ENCODE measurements at regions of chr17 and their contacts with region 1.

Region 1: DNA sequence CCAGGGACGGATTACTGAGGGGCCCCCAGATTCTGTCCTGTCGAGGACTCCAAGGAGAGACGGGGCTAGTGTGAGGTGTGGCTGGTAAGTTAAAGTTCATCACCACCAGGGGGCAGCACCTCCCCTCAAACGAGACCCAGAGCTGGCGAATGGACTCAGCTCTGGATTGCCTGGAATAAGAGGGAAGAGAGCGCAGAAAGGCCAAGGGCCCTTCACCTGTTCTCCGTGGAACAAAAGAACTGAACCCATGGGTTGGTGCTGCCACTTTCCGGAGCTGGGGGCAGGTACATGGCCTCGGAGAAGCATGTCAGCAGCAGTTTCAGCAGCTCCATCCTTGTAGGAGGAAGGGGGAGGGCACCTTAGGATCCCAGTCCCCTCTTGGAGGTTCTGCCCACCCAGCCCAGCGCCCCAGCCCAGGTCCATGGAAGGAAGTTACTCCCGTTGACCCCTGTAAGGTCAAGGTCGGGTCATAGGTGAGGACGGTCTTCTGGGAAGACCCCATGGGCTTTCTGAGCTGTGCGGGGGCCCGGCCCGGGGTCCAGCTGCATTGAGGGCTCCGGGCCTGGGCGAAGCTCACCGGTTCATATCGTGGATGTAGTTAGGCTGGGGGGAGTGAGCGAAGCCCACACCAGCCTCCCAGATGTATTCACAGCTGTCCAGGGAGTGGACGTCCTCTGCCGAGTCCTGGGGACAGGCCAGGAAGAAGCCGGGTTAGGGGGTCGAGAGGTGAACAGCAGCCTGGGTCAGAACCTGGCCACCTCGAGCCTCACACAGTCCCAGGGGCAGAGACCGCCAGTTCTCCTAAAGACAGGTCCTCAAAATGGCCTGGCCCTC is 10.7 kb downstream of the HID1 start:
- DNase-seq: peak; percentile 80
- ATAC-seq: peak; percentile 80
- H3K4me3 ChIP-seq: no peak overlapping the region
- H3K27ac ChIP-seq: no peak overlapping the region
- H3K4me1 ChIP-seq: peaks cover 11 to 20% of the 10 kb centered on the region in 2 experiments; a peak in 3 of 4 replicates
- H3K27me3 ChIP-seq: no peaks in the 10 kb centered on the region
- CTCF ChIP-seq: peak; percentile 75 to 95 (median 87)
- POLR2A ChIP-seq: no peak
- RAD21 ChIP-seq: peak; percentile 99

Region 2: DNA sequence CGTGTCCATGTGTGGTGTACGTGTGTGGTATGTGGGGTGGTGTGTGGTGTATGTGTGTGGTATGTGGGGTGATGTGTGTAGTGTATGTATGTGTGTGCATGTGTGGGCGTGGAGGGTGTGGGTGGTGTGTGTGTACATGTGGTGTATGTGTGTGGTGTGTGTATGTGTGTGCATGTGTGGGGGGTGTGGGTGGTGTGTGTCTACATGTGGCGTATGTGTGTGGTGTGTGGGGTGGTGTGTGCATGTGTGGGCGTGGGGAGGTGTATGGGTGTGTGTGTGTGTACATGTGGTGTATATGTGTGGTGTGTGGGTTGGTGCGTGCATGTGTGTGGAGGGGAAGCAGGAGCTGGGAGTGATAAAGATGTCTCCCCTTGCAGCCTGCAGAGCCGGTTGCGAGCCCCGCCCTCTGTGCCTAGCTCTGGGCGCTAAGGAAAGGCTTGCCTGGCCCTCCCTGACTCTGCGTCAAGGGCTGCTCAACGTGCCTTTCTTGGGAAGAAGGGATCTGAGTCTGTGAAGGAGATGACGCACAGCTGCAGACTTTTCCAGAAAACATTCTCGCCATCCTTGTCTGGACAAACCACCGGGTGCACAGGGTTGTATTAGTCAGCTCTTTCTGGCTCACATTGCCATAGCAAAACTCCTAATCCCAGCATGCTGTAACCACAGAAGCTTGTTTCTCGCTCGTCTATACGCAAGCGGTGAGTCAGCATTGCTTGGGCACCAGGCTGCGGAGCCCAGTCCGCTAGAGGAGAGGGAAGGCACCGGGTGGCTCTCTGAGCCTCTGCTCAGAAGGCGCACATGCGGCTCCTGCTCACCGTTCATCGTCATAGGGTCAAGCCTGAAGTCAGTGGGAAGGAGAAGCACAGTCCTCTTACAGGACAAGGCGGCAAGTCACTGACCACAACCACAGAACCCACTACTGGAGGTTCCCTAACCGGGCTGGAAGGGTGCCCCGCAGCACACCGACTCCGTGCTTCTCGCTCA is 392.6 kb before region 1 on chr17:
- CTCF ChIA-PET with region 1: no interaction called
- POLR2A ChIA-PET with region 1: no interaction called
- RAD21 ChIA-PET with region 1: no interaction called
- intact Hi-C with region 1: no loop called
- DNase-seq: peak; percentile 97
- ATAC-seq: peak; percentile 85
- H3K4me3 ChIP-seq: peak overlapping the region; percentile 6 to 28; a peak in 2 of 4 replicates
- H3K27ac ChIP-seq: peak overlapping the region; percentile 36
- H3K4me1 ChIP-seq: peaks cover 14 to 25% of the 10 kb centered on the region in 2 experiments
- H3K27me3 ChIP-seq: peaks cover 10% of the 10 kb centered on the region
- CTCF ChIP-seq: no peak
- POLR2A ChIP-seq: no peak
- RAD21 ChIP-seq: peak; percentile 7; the same call in 1 of the 2 replicates

Region 3: DNA sequence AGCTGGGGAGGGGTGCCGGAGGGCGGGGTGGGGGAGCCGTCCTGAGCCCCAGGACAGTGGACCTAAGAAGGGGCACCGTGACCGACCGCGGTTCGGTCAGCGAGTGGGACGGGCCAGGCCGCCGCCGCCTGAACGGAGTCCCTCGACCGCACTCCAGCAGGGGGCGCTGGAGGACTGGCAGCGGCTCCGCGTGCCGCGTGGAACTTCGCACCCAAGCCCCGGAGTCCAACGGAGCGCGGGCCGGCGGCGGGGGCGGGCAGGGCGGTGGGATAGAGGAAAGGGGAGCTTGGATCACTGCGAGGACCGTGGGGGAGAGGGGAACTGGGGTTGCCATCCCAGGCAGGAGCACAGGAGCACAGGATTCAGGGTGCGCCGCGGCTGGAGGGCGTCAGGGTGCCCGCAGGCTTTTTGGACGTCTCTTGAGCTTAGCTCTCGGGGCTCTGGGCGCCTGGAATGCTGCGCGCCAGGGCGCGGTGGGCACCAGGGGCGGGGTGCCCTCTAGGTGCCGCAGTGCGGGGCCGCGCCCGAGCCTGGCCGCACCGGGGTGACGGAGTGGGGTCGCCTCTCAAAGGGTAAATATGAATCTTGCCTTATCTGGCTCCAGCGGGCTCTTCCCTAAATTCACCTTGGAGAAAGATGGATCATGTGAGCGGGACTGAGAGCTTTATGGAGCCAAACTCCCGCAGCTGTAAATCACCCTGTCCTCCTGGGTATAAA is 38.2 kb before region 1 on chr17:
- CTCF ChIA-PET with region 1: interaction called, 21 read pairs
- POLR2A ChIA-PET with region 1: no interaction called
- RAD21 ChIA-PET with region 1: interaction called, 4 to 6 read pairs
- intact Hi-C with region 1: loop called (anchors 1 kb)
- DNase-seq: no peak
- ATAC-seq: peak; percentile 84
- H3K4me3 ChIP-seq: peak overlapping the region; percentile 58 to 65
- H3K27ac ChIP-seq: no peak overlapping the region
- H3K4me1 ChIP-seq: peaks cover 16 to 34% of the 10 kb centered on the region in 2 experiments
- H3K27me3 ChIP-seq: peaks cover 4% of the 10 kb centered on the region; the same call in 1 of the 2 replicates
- CTCF ChIP-seq: peak; percentile 84 to 93 (median 90)
- POLR2A ChIP-seq: no peak
- RAD21 ChIP-seq: no peak; the same call in none of the 2 replicates

Region 4: DNA sequence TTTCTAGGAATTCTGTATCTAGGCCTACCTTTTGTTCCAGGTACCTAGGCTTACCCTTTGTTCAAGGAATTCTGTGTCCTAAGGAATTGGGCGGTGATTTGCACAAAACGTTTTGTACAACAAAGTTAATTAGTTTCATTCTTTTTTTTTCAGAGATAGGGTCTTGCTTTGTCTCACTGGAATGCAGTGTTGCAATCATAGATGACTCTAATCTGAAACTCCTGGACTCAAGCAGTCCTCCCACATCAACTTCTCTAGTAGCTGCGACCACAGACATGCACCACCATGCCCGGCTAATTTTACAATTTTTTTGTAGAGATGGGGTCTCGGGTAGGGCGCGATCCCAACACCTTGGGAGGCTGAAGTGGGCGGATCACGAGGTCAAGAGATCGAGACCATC is 32.6 kb after region 1 on chr17:
- CTCF ChIA-PET with region 1: interaction called, 16 read pairs
- POLR2A ChIA-PET with region 1: no interaction called
- RAD21 ChIA-PET with region 1: no interaction called
- intact Hi-C with region 1: no loop called
- DNase-seq: no peak
- ATAC-seq: no peak
- H3K4me3 ChIP-seq: no peak overlapping the region
- H3K27ac ChIP-seq: no peak overlapping the region
- H3K4me1 ChIP-seq: peaks cover 29 to 41% of the 10 kb centered on the region in 2 experiments
- H3K27me3 ChIP-seq: no peaks in the 10 kb centered on the region
- CTCF ChIP-seq: no peak
- POLR2A ChIP-seq: no peak
- RAD21 ChIP-seq: no peak

Region 5: DNA sequence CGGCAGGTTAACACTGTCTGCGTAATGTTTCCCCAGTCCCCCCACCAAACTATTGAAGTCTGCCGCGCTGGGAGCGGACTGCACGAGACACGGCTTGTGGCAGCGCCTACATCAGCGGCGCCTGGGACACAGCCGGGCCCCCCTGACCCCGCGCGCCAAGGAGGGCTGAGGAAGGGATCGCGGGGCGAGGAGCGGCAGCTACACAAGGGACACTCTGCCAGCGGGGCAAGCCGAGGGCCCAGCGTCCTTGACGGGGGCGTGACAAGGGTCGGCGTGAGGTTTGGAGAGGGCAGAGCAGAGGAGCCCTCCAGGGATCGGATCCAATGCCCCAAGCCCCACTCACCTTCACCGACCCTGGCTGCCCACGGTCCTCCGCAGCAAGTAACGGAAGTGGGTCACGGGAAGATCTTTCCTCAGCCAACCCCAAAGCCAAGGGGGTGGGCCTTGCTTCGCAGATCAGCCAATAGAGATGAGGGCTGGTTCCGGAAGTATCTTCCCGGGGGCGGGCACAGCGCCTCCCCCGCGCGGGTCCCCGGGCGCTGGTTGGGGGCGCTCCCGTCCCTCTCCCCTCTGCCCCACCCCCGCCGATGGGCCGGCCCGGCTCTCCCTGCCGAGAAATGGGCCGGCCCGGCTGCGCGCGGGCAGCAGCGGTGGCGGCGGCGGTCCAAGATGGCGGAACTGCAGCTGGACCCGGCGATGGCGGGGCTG is 84.9 kb after region 1 on chr17 and contains the starts of genes ATP5PD and KCTD2:
- CTCF ChIA-PET with region 1: interaction called, 11 read pairs
- POLR2A ChIA-PET with region 1: no interaction called
- RAD21 ChIA-PET with region 1: no interaction called
- intact Hi-C with region 1: no loop called
- DNase-seq: peak; percentile 97
- ATAC-seq: peak; percentile 91
- H3K4me3 ChIP-seq: peak within 1 kb of the TSS; percentile 86 to 98
- H3K27ac ChIP-seq: peak within 1 kb of the TSS; percentile 99
- H3K4me1 ChIP-seq: peaks cover 10 to 17% of the 10 kb centered on the region in 2 experiments; a peak in 3 of 4 replicates
- H3K27me3 ChIP-seq: no peaks in the 10 kb centered on the region
- CTCF ChIP-seq: no peak
- POLR2A ChIP-seq: peak; percentile 96
- RAD21 ChIP-seq: no peak; the same call in 1 of the 2 replicates
- total RNA-seq, gene ATP5PD: 407 TPM
- total RNA-seq, gene KCTD2: 23.3 TPM

Region 6: GRCh38 chr17:75173526-75173925 is 211.7 kb after region 1 on chr17:
- CTCF ChIA-PET with region 1: interaction called, 13 read pairs
- POLR2A ChIA-PET with region 1: no interaction called
- RAD21 ChIA-PET with region 1: no interaction called
- intact Hi-C with region 1: no loop called
- DNase-seq: no peak
- ATAC-seq: no peak
- H3K4me3 ChIP-seq: no peak overlapping the region
- H3K27ac ChIP-seq: no peak overlapping the region; the same call in 1 of the 2 replicates
- H3K4me1 ChIP-seq: peaks cover 0 to 7% of the 10 kb centered on the region in 2 experiments; a peak in 1 of 4 replicates
- H3K27me3 ChIP-seq: no peaks in the 10 kb centered on the region
- CTCF ChIP-seq: no peak
- POLR2A ChIP-seq: no peak
- RAD21 ChIP-seq: no peak

Region 7: DNA sequence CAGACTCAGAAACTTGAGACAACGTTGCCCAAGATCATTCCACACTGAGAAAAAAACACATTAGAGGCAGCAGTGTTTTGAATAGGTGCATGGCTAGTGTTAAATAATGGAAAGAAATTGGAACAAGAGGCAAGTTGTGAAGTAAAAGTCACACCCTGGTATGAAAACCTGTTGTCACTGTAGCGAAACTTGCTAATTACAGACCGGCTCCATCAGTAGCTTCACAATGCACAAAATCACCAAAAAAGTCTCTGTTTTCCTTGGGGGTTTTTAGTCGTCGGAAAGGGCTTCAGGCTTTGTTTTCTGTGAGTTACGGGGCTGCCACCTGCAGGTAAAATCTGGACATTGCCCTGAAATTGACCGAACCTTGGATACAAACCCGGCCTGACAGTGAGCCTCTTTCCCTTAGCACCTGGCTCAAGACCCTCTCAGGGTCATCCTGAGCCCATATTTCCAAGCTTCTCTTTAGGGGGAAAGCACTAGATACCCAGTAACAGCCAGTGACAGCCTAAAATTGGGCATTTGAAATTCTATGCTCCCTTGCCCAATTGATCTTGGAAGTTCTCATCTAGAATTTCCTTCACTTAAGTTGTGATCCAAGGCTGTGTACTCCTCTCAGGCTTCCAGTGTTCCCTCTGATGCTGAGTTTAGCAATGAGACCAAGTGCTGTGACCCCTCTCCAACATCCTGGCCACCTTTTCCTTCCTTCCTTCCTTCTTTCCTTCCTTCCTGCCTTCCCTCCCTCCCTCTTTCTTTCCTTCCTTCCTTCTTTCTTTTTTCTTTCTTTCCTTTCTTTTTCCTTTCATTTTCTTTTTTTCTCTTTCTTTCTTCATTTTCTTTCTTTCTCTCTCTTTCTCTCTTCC is 450.8 kb after region 1 on chr17:
- CTCF ChIA-PET with region 1: interaction called, 8 read pairs
- POLR2A ChIA-PET with region 1: no interaction called
- RAD21 ChIA-PET with region 1: no interaction called
- intact Hi-C with region 1: loop called (anchors 1 kb)
- DNase-seq: peak; percentile 75
- ATAC-seq: peak; percentile 93
- H3K4me3 ChIP-seq: peak overlapping the region; percentile 12 to 17; a peak in 2 of 4 replicates
- H3K27ac ChIP-seq: no peak overlapping the region
- H3K4me1 ChIP-seq: peaks cover 0 to 11% of the 10 kb centered on the region in 2 experiments; a peak in 2 of 4 replicates
- H3K27me3 ChIP-seq: peaks cover 5% of the 10 kb centered on the region; the same call in 1 of the 2 replicates
- CTCF ChIP-seq: peak; percentile 91 to 96 (median 91)
- POLR2A ChIP-seq: no peak
- RAD21 ChIP-seq: peak; percentile 99

Measured in HCT116 (cell line).